Activated T-helper 1 cell treated with anti-CD3 and anti-CD28 coated beads, Interleukin-12 subunit alpha, Interleukin-12 subunit beta, Interleukin-2, Interleukin-4 antibody, amounts not matched to agents 30 ng/mL and 10 ng/mL and 1 ng/mL, durations not matched to agents 14 hours and 24 hours and 36 hours (primary cell): ENCODE measurements at regions of chr22 and their contacts with region 1.

Region 1: DNA sequence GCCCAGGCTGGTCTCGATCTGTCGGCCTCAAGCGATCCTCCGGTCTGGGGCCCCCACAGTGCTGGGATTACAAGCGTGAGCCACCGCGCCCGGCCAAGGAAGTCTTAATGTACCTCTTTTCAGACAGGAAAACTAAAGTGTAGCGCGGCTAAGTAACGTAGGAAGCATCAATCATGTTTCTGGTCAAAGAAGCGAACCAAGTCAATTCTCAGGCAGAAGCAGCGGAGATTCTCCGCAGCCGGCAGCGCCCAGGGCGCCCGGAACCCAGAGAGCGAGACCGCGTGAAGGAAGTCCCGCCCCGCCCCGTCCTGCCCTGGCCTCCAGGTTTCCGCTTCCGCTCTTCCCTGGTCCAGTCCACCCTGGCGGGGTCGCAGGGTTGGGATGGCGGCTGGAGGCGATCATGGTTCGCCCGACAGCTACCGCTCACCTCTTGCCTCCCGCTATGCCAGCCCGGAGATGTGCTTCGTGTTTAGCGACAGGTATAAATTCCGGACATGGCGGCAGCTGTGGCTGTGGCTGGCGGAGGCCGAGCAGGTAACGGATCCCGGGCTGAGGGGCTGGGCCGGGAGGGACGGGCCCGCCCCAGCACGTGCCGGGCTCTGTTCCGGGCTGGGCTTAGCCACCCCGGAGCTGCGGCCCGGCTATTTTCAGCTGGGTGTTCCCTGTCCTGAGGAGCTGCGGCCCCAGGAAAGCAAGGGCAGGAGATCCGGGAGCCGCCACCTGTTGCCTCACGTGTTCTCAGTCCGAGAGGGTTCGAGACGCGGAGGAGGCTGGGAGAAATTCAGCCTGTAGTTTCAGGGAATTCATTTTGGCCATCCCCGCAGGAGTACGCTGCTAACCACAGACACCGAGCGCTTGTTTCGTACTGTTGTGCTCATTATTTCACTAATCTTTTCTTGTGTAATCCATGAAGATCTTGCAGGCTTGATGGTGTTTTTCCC is at the start of gene ADSL:
- DNase-seq: peak; percentile 83
- H3K4me3 Mint-ChIP-seq: peak within 1 kb of the TSS; percentile 94
- H3K27ac Mint-ChIP-seq: peak within 1 kb of the TSS; percentile 97
- H3K4me1 Mint-ChIP-seq: peaks cover 40% of the 10 kb centered on the region
- H3K27me3 Mint-ChIP-seq: no peaks in the 10 kb centered on the region
- total RNA-seq, gene ADSL: 156 and 160 TPM in 2 replicates

Region 2: GRCh38 chr22:40044102-40044869 is 302.2 kb before region 1 on chr22:
- intact Hi-C with region 1: loop called (anchors 1 kb)
- DNase-seq: peak; percentile 98
- H3K4me3 Mint-ChIP-seq: peak overlapping the region; percentile 90
- H3K27ac Mint-ChIP-seq: peak overlapping the region; percentile 100
- H3K4me1 Mint-ChIP-seq: peaks cover 17% of the 10 kb centered on the region
- H3K27me3 Mint-ChIP-seq: peaks cover 3% of the 10 kb centered on the region

Region 3: DNA sequence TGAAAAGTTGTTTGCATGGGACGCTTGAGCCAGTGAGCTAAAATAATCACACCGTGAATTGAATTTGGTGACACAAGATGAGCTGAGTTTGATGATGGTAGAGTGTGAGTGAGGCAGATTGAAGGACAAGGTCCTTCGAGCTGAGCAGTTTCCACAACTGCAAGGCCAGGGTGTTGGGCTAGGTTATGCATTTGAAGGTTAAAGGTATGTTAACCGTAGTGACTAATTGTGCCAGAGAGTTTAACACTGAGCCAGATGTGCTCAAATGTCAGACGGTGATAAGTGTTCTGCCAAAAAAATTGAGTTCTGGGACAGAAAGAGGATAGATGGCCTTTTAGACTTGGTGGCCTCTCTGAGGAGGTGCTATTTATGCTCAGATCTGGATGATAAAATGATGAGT is 262.2 kb before region 1 on chr22:
- intact Hi-C with region 1: no loop called
- DNase-seq: no peak
- H3K4me3 Mint-ChIP-seq: no peak overlapping the region
- H3K27ac Mint-ChIP-seq: no peak overlapping the region
- H3K4me1 Mint-ChIP-seq: peaks cover 4% of the 10 kb centered on the region
- H3K27me3 Mint-ChIP-seq: no peaks in the 10 kb centered on the region

Region 4: DNA sequence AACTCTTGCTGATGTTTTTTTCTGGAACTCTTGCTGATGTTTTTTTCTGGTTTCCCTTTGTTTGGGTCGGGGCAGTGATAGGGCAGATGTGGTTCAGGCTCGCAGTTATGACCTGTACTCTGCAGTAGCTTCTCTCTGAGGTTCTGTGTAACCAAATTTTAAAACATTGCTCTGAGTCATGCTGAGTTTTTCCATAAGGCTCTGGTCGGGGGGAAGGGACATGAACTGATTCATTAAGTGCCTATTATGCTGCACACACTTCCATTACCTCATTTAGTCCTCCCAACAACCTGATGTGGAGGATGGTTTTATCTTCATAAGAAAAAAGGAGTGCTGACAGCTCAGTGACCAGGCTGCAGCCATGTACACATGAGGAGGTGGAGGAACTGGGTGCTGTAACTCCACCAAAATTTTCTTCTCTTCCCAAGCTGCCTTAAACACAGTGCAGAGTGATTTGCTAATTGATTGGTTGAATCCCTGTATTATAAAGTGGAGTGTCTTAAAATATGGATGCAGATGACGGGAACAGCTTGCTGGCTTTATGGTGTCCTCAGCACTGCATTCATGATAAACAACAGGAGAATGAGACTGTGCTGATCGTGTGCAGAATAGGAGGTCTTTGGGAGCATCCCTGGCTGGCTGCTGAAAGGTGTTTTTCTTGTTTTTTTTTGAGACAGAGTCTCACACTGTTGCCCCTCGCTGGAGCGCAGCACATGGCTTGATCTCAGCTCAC is 149.7 kb before region 1 on chr22:
- intact Hi-C with region 1: loop called (anchors 1 kb)
- DNase-seq: no peak
- H3K4me3 Mint-ChIP-seq: no peak overlapping the region
- H3K27ac Mint-ChIP-seq: peak overlapping the region; percentile 73
- H3K4me1 Mint-ChIP-seq: peaks cover 50% of the 10 kb centered on the region
- H3K27me3 Mint-ChIP-seq: no peaks in the 10 kb centered on the region

Region 5: GRCh38 chr22:40240686-40241085 is 105.8 kb before region 1 on chr22:
- intact Hi-C with region 1: loop called (anchors 2 kb)
- DNase-seq: peak; percentile 11
- H3K4me3 Mint-ChIP-seq: no peak overlapping the region
- H3K27ac Mint-ChIP-seq: peak overlapping the region; percentile 74
- H3K4me1 Mint-ChIP-seq: peaks cover 63% of the 10 kb centered on the region
- H3K27me3 Mint-ChIP-seq: no peaks in the 10 kb centered on the region

Region 6: DNA sequence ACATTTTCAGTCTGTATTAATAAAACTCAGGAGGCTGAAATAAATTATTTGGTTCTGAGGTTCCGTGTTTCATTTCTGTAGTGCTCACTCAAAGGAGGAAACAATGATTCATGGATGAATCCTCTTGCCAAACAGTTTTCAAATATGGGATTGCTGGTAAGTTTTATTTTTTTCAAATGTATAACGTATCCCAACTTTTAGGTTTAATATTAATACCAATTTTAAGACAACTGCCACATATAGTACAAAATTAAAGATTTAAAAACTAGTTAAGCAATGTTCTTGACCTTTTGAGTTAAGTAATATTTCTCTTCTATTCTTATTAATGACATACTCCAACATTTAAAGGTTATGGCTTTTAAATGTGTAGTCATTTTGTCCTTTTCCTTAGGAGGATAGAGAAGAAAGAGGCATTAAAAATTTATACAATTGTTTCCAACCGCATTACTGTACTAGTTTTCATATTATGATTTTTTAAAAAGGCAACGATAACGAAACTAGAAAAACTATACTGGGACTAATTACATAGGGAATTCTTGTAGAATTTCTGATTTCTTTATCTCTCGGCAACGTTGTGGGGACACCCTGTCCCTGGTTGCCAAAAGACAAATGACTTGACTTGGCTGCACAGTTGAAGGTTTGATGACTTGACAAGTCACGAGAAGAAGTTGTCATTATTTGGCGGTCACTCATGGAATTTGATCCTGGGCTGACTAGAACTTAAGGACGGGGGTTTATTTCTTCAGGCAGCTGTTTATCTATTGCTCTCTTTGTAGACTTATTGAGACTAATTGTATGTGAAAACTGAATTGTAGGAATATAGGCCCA is 69.2 kb before region 1 on chr22:
- intact Hi-C with region 1: loop called (anchors 1 kb)
- DNase-seq: no peak
- H3K4me3 Mint-ChIP-seq: no peak overlapping the region
- H3K27ac Mint-ChIP-seq: peak overlapping the region; percentile 29
- H3K4me1 Mint-ChIP-seq: peaks cover 31% of the 10 kb centered on the region
- H3K27me3 Mint-ChIP-seq: no peaks in the 10 kb centered on the region

Region 7: GRCh38 chr22:40289991-40290459 is 56.4 kb before region 1 on chr22:
- intact Hi-C with region 1: loop called (anchors 1 kb)
- DNase-seq: peak; percentile 61
- H3K4me3 Mint-ChIP-seq: peak overlapping the region; percentile 65
- H3K27ac Mint-ChIP-seq: peak overlapping the region; percentile 95
- H3K4me1 Mint-ChIP-seq: peaks cover 55% of the 10 kb centered on the region
- H3K27me3 Mint-ChIP-seq: no peaks in the 10 kb centered on the region

Region 8: GRCh38 chr22:40463017-40463631 is 116.7 kb after region 1 on chr22:
- intact Hi-C with region 1: no loop called
- DNase-seq: peak; percentile 37
- H3K4me3 Mint-ChIP-seq: peak overlapping the region; percentile 93
- H3K27ac Mint-ChIP-seq: peak overlapping the region; percentile 99
- H3K4me1 Mint-ChIP-seq: peaks cover 55% of the 10 kb centered on the region
- H3K27me3 Mint-ChIP-seq: no peaks in the 10 kb centered on the region